PC-3 (cell line): ENCODE measurements at regions of chr1 and their contacts with region 1.

Region 1: GRCh38 chr1:88683541-88684481 is at the start of gene PKN2:
- DNase-seq: peak; percentile 99
- ATAC-seq: peak; percentile 88
- H3K4me3 ChIP-seq: peak within 1 kb of the TSS; percentile 84
- H3K27ac ChIP-seq: peak within 1 kb of the TSS; percentile 86
- H3K4me1 ChIP-seq: peaks cover 38% of the 10 kb centered on the region
- H3K27me3 ChIP-seq: no peaks in the 10 kb centered on the region
- CTCF ChIP-seq: 0 out of 2 replicates have a peak, but pooled peaks have one; percentile 8
- total RNA-seq, gene PKN2: 20.8 and 36.1 TPM in 2 replicates

Region 2: DNA sequence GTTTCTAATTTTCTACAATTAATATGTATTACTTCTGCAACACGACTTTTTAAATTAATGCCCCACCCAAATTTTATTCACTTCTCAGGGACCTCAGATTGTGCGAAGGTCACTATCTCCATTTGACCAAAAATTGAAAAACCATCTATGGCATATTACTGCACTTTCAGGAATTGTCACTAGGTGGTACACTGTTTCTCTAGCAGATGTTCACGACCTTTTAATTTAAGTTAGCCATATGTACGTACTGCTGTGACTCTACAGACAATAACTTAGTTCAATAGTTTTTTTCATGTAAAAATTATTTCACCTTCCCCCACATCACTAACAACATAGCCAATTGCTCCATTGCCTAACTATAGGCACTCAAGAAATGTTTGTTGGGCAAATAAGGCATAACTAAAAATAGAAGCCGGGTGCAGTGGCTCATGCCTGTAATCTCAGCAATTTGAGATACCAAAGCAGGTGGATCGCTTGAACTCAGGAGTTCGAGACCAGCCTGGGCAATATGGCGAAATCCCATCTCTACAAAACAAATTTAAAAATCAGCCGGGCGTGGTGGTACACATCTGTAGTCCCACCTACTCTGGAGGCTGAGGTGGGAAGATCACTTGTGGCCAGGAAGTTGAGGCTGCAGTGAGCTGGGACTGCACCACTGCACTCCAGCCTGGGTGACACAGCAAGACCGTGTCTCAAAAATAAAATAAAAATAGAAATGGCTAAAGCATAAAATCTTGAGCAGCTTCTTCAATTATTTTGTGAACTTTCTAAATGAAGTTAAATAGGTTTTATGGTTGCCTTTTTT is 75.5 kb before region 1 on chr1:
- CTCF ChIA-PET with region 1: interaction called, 3 read pairs
- POLR2A ChIA-PET with region 1: no interaction called
- intact Hi-C with region 1: loop called (anchors 2 kb)
- DNase-seq: peak; percentile 71
- ATAC-seq: peak; percentile 54
- H3K4me3 ChIP-seq: no peak overlapping the region
- H3K27ac ChIP-seq: no peak overlapping the region
- H3K4me1 ChIP-seq: peaks cover 23% of the 10 kb centered on the region
- H3K27me3 ChIP-seq: no peaks in the 10 kb centered on the region
- CTCF ChIP-seq: peak; percentile 84

Region 3: DNA sequence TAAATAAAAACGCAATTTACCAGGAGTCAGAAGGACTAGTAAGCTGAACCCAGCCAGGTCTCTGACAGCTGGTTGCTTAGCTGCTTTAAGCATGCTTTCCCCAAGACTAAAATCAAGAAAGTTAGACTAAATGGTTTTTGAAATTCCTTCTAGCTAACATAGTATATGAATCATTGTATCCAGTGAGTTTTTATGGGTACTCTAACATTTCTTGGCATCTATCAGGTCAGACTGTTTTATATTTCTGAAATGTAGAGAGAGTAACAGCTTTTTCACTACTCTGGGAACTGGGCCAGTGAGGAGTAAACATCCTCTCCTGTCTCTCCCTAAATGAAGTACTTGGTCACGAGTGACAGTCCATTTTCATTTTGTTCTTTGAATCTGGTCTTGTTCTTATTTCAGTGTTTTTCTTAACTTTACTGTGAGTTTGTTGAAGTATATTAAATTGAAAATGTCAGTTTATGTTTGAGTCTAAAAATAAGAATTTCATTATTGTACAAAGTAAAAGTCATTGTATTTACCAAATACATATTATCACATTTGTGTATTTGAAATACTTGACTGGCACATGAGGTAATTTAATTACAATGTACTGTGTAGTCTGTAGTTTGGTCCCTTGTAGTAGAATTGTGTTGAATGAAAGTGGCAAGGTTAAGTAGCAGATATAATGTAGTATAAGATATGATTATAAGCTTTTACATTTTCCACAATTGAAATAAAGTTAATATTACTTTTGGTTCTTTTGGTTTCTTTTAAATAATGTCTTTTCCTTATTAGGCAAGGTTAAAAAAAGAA is 47.9 kb after region 1 on chr1:
- CTCF ChIA-PET with region 1: interaction called, 4 read pairs
- POLR2A ChIA-PET with region 1: interaction called, 3 read pairs
- intact Hi-C with region 1: loop called (anchors 2 kb)
- DNase-seq: peak; percentile 89
- ATAC-seq: peak; percentile 93
- H3K4me3 ChIP-seq: peak overlapping the region; percentile 51; the same call in 1 of the 2 replicates
- H3K27ac ChIP-seq: peak overlapping the region; percentile 44
- H3K4me1 ChIP-seq: peaks cover 20% of the 10 kb centered on the region
- H3K27me3 ChIP-seq: no peaks in the 10 kb centered on the region
- CTCF ChIP-seq: no peak

Region 4: GRCh38 chr1:88773540-88774150 is 89.8 kb after region 1 on chr1:
- CTCF ChIA-PET with region 1: no interaction called
- POLR2A ChIA-PET with region 1: no interaction called
- intact Hi-C with region 1: loop called (anchors 5 kb)
- DNase-seq: peak; percentile 78
- ATAC-seq: peak; percentile 86
- H3K4me3 ChIP-seq: peak overlapping the region; percentile 34; the same call in 1 of the 2 replicates
- H3K27ac ChIP-seq: peak overlapping the region; percentile 94
- H3K4me1 ChIP-seq: peaks cover 28% of the 10 kb centered on the region
- H3K27me3 ChIP-seq: no peaks in the 10 kb centered on the region
- CTCF ChIP-seq: no peak

Region 5: DNA sequence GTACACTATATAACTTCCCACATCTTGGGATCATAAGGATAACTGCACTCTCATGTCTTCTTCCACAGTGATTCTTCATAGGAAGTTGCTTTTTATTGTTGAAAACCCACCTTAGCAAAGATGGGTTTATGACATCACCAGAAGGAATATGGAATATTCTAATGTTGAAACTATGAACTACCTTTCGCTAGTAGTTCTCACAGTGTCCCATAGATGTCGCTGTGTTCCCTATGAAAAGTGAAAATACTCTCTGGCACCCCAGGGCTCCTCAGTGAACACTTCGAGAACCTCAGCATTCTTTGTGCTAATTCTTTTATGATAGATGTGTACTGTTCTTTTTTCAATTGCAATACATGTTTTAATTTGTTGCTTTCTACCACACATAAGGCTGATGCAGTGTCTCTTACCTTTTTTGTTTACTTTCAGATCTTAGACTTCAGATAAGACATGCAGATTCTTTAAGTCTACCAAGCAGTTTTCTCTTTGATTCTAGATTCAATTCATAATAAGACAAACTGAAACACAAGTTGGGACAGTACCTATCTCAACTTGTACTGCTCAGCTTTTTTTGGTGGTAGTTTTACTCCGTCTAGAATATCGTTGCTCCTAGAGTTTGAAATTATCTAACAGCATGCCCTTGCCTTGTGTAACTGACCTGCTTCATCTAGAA is 116.7 kb after region 1 on chr1:
- CTCF ChIA-PET with region 1: no interaction called
- POLR2A ChIA-PET with region 1: no interaction called
- intact Hi-C with region 1: no loop called
- DNase-seq: peak; percentile 64
- ATAC-seq: peak; percentile 18; the same call in 1 of the 2 replicates
- H3K4me3 ChIP-seq: no peak overlapping the region
- H3K27ac ChIP-seq: no peak overlapping the region
- H3K4me1 ChIP-seq: peaks cover 9% of the 10 kb centered on the region
- H3K27me3 ChIP-seq: no peaks in the 10 kb centered on the region
- CTCF ChIP-seq: peak; percentile 88

Region 6: DNA sequence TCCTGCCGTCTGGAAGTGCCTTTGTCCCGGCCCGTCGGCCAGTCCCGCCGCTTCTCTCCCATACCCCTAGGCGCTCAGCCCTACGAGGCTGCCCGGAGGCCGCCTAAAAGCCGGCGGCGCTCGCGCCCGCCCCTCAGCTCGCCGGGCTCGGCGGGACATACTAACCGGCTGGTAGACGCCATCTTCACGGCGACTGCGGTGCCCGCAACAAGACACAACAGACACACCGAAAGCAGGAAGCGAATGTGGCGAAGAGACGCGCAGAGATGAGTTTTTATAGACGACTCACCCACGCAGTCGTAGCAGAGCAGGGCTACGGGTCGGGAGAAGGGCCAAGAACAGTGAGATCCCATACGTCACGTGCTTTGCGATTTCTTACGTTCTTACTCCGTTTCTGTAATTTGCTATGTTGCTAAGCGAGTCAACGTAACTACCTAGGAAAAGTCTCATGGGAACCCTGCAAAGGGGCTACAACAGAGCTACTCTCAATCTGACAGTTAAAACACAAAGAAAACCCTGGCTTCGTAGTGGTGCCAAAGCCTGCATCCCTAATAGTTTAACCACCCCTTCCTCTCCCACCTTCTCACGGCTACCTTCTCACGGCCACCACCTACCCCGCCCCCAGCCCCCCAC is 207.6 kb after region 1 on chr1 and contains the start of gene GTF2B:
- CTCF ChIA-PET with region 1: no interaction called
- POLR2A ChIA-PET with region 1: interaction called, 11 read pairs
- intact Hi-C with region 1: loop called (anchors 5 kb)
- DNase-seq: peak; percentile 94
- ATAC-seq: peak; percentile 62
- H3K4me3 ChIP-seq: peak within 1 kb of the TSS; percentile 96
- H3K27ac ChIP-seq: peak within 1 kb of the TSS; percentile 33
- H3K4me1 ChIP-seq: peaks cover 27% of the 10 kb centered on the region
- H3K27me3 ChIP-seq: no peaks in the 10 kb centered on the region
- CTCF ChIP-seq: no peak
- total RNA-seq, gene GTF2B: 29.3 and 32.1 TPM in 2 replicates